ENCODE measurements at regions of chr17 and their contacts with region 1.

Region 1: GRCh38 chr17:996554-997344 is at the start of gene TIMM22:
- DNase-seq: peak; percentile 98
- H3K4me3 Mint-ChIP-seq: peak within 1 kb of the TSS; percentile 95
- H3K27ac Mint-ChIP-seq: peak within 1 kb of the TSS; percentile 94
- H3K4me1 Mint-ChIP-seq: peaks cover 19% of the 10 kb centered on the region
- H3K27me3 Mint-ChIP-seq: no peaks in the 10 kb centered on the region
- CTCF ChIP-seq: peak; percentile 92
- total RNA-seq, gene TIMM22: 16.6 and 18.5 TPM in 2 replicates

Region 2: DNA sequence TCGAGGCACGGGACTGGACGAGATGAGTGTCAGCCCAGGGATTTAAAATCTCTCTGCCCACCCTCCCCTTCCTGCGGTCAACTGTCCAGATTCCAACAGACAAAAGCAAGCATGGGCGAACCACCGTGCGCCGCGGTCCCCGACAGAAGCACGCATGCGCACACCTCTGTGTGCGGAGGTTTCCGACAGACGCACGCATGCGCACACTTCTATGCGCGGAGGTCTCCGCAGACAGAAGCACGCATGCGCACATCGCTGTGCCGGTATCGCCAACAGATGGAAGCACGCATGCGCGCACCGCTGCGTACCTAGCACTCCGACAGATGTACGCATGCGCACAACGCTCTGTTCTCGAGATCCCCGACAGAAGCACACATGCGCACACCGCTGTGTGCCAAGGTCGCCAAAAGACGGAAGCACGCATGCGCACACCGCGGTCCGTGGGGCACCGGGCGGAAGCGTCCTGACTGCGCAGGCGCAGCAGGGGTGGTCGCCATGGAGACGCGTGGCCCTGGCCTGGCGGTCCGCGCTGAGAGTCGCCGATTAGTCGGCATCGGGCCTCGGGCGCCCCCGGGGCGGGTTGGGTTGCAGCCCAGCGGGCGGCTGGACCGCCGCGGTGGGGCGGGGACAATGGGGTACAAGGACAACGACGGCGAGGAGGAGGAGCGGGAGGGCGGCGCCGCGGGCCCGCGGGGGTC is 586.8 kb before region 1 on chr17:
- CTCF ChIA-PET with region 1: interaction called, 18 read pairs
- POLR2A ChIA-PET with region 1: interaction called, 5 read pairs
- intact Hi-C with region 1: no loop called
- DNase-seq: peak; percentile 99
- H3K4me3 Mint-ChIP-seq: peak overlapping the region; percentile 83
- H3K27ac Mint-ChIP-seq: peak overlapping the region; percentile 91
- H3K4me1 Mint-ChIP-seq: peaks cover 14% of the 10 kb centered on the region
- H3K27me3 Mint-ChIP-seq: no peaks in the 10 kb centered on the region
- CTCF ChIP-seq: no peak

Region 3: GRCh38 chr17:732067-732901 is 264.5 kb before region 1 on chr17 and contains the start of gene TLCD3A:
- CTCF ChIA-PET with region 1: interaction called, 10 read pairs
- POLR2A ChIA-PET with region 1: interaction called, 24 read pairs
- intact Hi-C with region 1: no loop called
- DNase-seq: peak; percentile 60
- H3K4me3 Mint-ChIP-seq: peak within 1 kb of the TSS; percentile 87
- H3K27ac Mint-ChIP-seq: peak within 1 kb of the TSS; percentile 61
- H3K4me1 Mint-ChIP-seq: peaks cover 31% of the 10 kb centered on the region
- H3K27me3 Mint-ChIP-seq: no peaks in the 10 kb centered on the region
- CTCF ChIP-seq: no peak
- total RNA-seq, gene TLCD3A: 28.4 and 31.6 TPM in 2 replicates

Region 4: DNA sequence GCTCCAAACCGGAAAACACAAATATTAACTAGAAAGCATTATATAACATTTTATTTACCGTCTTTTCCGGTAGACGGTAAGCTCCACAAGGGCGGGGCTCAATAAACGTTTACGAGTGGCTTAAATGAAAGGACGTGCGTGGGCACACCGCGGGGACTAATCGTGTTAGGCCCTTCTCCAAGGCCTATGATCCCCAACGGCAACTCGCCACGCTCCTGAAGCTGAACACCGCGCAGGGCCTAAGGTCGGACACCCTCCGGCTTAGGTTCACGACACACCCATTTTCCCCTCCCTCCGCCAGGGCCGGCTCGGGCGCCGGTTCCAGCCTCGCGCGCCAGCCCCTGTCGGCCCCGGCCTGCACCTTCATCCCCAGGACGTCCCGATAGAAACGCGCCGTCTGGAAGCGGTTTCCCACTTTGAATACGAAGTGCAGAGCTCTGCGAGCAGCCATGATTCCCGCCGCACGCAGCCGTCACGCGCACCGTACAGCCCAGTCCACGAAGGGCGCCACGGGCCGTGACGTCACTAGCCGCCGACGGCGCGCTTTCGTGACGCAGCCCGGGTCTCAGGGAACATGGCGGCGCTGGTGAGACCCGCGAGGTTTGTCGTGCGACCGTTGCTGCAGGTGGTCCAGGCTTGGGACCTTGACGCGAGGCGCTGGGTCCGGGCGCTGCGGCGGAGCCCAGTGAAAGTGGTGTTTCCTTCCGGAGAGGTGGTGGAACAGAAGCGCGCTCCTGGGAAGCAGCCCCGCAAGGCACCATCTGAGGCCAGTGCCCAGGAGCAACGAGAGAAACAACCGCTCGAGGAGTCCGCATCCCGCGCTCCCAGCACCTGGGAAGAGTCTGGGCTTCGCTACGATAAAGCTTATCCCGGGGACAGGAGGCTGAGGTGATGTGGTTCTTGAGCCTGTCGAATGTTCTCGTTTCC is 214.7 kb before region 1 on chr17 and contains the starts of genes GLOD4 and MRM3:
- CTCF ChIA-PET with region 1: interaction called, 10 read pairs
- POLR2A ChIA-PET with region 1: interaction called, 41 read pairs
- intact Hi-C with region 1: no loop called
- DNase-seq: peak; percentile 77
- H3K4me3 Mint-ChIP-seq: peak within 1 kb of the TSS; percentile 99
- H3K27ac Mint-ChIP-seq: peak within 1 kb of the TSS; percentile 98
- H3K4me1 Mint-ChIP-seq: peaks cover 10% of the 10 kb centered on the region
- H3K27me3 Mint-ChIP-seq: no peaks in the 10 kb centered on the region
- CTCF ChIP-seq: no peak
- total RNA-seq, gene GLOD4: 59.0 and 62.6 TPM in 2 replicates
- total RNA-seq, gene MRM3: 19.4 and 25.1 TPM in 2 replicates

Region 5: DNA sequence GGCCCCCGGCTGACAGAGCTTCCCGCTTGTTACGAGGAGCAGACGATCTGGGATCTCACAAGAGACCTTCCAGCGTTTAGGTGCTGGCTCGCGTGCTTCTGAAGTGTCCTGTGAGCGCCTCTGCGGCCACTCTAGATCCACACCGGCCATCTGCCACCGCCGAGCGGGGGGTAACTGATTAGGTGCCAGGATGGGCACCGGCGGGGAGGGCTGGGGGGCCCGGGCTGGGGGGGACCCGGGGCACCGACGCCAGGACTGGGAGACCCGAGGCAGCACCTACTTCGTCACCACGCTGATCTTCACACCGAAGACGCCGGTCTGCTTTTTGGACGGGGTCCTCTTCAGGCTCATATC is 15.6 kb after region 1 on chr17:
- CTCF ChIA-PET with region 1: interaction called, 10 read pairs
- POLR2A ChIA-PET with region 1: no interaction called
- intact Hi-C with region 1: no loop called
- DNase-seq: no peak
- H3K4me3 Mint-ChIP-seq: no peak overlapping the region
- H3K27ac Mint-ChIP-seq: no peak overlapping the region
- H3K4me1 Mint-ChIP-seq: no peaks in the 10 kb centered on the region
- H3K27me3 Mint-ChIP-seq: no peaks in the 10 kb centered on the region
- CTCF ChIP-seq: no peak

Region 6: DNA sequence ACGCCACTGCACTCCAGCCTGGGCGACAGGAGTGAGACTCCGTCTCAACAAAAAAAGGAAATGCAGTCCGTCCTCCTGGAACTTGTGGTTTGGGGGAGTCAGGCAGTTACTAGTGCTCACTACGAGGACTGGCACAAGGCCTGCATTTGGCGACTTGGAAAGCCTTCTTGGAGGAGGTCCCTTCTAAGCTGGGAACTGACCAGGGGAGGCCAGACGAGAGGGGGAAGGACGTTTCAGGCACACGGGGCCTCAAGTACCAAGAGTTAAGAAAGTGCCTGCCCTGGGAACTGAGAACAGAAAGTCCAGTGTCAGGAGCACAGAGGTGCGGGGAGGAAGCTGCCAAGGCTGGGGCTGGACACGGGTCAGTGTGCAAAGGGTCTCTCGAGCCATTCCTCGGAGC is 93.2 kb after region 1 on chr17:
- CTCF ChIA-PET with region 1: no interaction called
- POLR2A ChIA-PET with region 1: no interaction called
- intact Hi-C with region 1: no loop called
- DNase-seq: no peak
- H3K4me3 Mint-ChIP-seq: no peak overlapping the region
- H3K27ac Mint-ChIP-seq: no peak overlapping the region
- H3K4me1 Mint-ChIP-seq: no peaks in the 10 kb centered on the region
- H3K27me3 Mint-ChIP-seq: no peaks in the 10 kb centered on the region
- CTCF ChIP-seq: no peak

Measured in MCF 10A (cell line).